Gastrocnemius medialis (tissue), 4 donors: ENCODE measurements at regions of chr5 and their contacts with region 1.

Region 1: DNA sequence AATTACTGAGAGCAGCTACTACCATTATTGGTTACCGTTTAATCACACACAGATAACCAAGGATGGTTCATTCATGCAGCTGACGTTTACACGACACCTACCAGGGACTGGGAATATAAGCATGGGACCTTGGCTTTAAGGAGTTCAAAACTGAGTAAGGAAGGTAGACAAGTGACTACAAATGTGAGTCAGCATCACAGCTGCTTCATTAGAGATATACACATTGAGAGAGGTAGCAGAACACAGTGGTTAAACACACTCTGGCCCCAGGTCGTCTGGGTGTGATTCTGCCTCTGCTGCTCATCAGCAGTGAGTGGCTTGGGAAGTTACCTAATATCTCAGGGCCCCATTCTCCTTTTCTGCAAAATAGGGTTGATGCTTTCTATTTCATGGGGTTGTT is 268.6 kb downstream of the NR3C1 start:
- DNase-seq: peak in 1 of 2 donors; percentile 50
- ATAC-seq: peak; percentile 3 to 14
- H3K4me3 ChIP-seq: peak overlapping the region in 2 of 4 donors; percentile 47 to 50
- H3K27ac ChIP-seq: peak overlapping the region; percentile 90 to 97 (median 95)
- H3K4me1 ChIP-seq: peaks cover 90 to 92% of the 10 kb centered on the region in 2 donors
- H3K27me3 ChIP-seq: no peaks in the 10 kb centered on the region
- CTCF ChIP-seq: no peak
- POLR2A ChIP-seq: peak; percentile 22 to 29

Region 2: DNA sequence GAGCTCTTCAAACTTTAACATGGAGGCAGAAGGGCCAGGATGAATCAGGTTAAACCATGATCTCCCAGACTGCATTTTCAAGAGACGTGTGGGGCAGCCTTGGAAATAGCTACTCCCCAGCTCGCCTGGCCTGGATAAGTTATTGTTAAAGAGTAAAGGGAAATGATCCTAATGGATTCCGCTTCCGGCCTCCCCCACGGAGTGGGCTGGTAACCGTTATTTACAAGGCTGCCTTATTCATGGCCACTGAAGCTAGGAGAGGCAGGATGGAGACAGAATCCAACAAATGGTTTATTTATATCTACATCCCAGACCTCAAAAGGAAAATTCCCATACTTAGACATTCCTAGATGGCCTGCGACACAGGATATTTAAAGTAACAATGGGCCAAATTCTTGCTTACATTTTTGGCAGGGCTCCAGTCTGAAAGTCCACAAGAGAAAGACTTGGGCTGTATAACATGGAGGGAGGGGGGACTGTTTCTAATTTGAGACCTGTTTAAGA is 837.9 kb before region 1 on chr5:
- in situ Hi-C with region 1: no loop called
- intact Hi-C with region 1: no loop called
- DNase-seq: no peak
- ATAC-seq: no peak
- H3K4me3 ChIP-seq: no peak overlapping the region
- H3K27ac ChIP-seq: peak overlapping the region in 1 of 4 donors; percentile 28
- H3K4me1 ChIP-seq: peaks cover 0 to 3% of the 10 kb centered on the region in 2 donors
- H3K27me3 ChIP-seq: no peaks in the 10 kb centered on the region
- CTCF ChIP-seq: no peak
- POLR2A ChIP-seq: no peak

Region 3: DNA sequence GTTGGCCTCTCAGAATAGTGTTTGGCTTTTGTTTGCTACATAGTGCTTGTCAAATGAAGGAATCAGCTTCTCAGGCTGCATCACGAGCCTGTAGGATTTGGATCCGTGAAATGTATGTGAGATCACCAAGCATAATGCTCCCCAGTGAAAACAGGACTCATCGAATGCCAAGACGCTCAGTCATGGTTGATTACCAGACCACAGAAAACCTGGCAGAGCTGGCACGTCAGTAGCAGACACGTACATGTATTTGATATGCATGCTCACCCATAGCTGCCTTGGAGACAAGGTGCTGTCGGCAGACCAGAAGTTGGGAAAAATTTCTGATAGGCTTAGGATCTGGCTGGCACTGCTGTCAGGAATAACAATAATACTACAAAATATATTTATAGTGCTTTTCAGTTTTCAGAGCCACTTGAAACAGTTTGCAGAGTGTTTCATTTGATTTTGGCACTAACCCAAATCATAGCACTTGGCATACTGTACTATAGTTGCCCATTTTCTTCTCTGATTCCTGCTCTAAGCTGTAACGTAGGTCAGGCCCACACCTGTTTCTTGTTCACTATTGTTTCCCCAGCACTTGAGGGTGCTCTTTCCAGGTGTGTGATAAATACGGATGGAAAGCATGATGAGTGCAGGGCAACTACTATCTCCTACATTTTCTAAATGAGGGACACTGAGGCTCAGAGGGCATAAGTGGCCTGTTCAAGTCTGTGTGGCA is 42.5 kb after region 1 on chr5:
- in situ Hi-C with region 1: no loop called
- intact Hi-C with region 1: loop called (anchors 2 kb)
- DNase-seq: peak; percentile 76 to 84
- ATAC-seq: peak; percentile 71 to 85
- H3K4me3 ChIP-seq: no peak overlapping the region
- H3K27ac ChIP-seq: peak overlapping the region; percentile 68 to 84 (median 81)
- H3K4me1 ChIP-seq: peaks cover 41 to 48% of the 10 kb centered on the region in 2 donors
- H3K27me3 ChIP-seq: no peaks in the 10 kb centered on the region
- CTCF ChIP-seq: no peak
- POLR2A ChIP-seq: peak; percentile 19 to 39

Region 4: GRCh38 chr5:143222287-143223231 is 87.7 kb after region 1 on chr5:
- in situ Hi-C with region 1: no loop called
- intact Hi-C with region 1: no loop called
- DNase-seq: no peak
- ATAC-seq: no peak
- H3K4me3 ChIP-seq: no peak overlapping the region
- H3K27ac ChIP-seq: no peak overlapping the region
- H3K4me1 ChIP-seq: peaks cover 11 to 41% of the 10 kb centered on the region in 2 donors
- H3K27me3 ChIP-seq: no peaks in the 10 kb centered on the region
- CTCF ChIP-seq: no peak
- POLR2A ChIP-seq: no peak